ENCODE measurements at regions of chr22 and their contacts with region 1.

Region 1: DNA sequence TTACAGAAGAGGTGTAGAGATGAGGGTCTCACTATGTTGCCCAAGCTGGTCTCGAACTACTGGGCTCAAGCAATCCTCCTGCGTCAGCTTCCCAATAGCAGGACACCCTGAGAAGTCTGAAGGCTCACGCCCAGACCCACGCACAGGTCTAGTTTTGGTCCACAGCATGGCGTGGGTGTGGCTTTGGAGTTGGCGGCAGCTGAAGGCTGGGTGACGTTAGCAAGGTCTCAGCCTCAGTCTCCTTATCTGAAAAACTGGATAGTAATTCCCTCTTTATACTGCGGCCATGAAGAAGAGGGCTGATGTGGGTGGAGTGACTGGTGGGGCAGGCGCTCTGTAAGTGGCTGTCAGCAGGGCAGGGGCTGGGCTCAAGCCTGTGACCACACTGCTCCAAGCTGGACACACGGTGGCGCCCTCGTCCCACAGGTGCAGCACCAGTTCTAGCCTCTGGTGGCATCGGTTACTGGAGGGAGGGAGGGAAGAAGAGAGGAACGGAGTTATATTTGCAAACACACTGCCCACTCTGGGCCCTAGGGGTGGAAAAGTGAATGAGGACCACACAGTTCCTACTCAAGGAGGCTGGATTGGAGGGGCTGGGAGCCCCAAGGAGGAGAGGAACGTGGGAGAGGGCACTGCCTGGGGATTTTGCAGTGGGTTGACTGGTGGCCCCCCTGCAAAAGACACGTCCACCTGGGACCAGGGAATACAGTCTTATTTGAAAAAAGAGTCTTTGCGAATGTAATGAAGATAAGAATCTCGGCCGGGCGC is 19.6 kb upstream of the CARD10 start:
- DNase-seq: peak; percentile 89
- H3K4me3 ChIP-seq: no peak overlapping the region
- H3K27ac ChIP-seq: no peak overlapping the region
- H3K27me3 ChIP-seq: no peaks in the 10 kb centered on the region
- CTCF ChIP-seq: peak; percentile 91

Region 2: DNA sequence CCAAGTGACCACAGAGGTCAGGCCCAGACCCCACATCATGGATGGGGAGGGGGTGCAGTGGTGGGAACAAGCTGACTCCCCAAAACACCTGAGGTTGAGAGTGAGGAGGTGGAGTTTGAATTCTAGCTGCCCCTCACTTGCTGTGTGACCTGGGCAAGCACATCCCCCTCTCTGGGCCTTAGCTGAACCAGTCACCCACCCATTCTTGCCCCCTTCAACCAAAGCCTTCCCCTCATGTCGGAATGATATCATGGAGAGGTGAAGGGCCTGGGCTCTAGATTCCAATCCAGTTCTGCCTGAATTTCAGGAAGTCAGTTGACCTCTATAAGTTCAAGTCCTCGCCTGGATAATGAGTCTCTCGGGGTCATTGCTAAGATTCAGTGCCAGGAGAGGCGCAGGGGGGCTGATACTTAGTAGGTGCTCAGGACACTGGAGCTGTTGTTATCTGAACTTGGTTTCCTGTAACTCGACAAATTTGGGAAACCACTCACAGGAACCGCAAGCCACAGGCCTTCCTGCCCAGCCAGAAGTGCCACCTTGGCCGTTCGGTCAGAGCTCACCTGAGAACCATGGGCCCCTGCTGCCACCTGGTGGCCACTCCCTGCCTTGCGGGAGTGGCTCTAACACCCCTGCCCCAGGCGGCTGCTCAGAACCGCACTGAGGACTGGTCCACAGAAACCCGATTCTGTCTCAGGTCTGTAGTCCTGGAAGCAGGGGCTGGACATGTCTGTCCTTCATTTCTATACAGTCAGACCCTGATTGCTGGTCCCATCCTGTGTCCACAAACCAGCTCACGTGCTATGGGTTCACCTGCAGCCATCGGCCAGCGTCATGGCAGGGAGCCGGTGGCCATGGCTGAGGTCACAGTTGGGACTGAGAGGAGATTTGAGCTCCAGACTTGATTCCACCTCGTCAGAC is 28.4 kb after region 1 on chr22:
- CTCF ChIA-PET with region 1: interaction called, 375 read pairs
- POLR2A ChIA-PET with region 1: interaction called, 4 read pairs
- DNase-seq: no peak
- H3K4me3 ChIP-seq: no peak overlapping the region
- H3K27ac ChIP-seq: peak overlapping the region; percentile 11
- H3K27me3 ChIP-seq: no peaks in the 10 kb centered on the region
- CTCF ChIP-seq: peak; percentile 85

Measured in AG04450 (cell line).